H1 (cell line): ENCODE measurements at regions of chr3 and their contacts with region 1.

Region 1: DNA sequence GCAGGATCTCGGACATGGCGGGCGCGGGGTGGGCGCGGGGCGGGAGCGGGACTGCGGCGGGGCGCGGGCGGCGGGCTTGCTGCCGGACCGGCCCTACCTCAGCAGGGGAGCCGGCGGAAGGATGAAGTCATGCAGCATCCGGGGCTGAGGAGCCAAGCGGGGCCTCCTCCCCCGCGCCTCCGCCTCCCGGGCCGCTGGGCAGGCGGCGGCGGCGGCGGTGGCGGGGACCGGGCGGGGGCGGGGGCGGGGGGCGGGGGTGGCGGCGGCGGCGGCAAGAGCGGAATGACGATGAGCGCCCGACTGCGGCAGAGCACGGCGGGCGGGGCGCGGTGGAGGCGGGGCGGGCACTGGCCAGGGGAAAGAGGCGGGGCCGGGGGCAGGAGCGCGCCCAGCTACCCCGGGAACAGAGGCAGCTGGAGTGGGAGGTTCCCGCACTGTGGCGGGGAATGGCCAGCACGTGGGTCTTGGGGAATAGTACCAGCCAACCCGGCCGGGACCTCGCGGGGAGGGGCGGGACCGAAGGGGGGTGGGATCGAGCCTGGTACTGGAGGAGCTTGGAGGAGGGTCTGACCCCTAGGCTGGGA is at the start of gene CAMK2N2:
- DNase-seq: peak in 1 of 2 experiments; percentile 88
- H3K4me3 ChIP-seq: peak within 1 kb of the TSS; percentile 36 to 84 (median 74)
- H3K27ac ChIP-seq: no peak within 1 kb of the TSS
- H3K4me1 ChIP-seq: peaks cover 0 to 17% (median 8%) of the 10 kb centered on the region in 4 experiments; a peak in 4 of 7 replicates
- H3K27me3 ChIP-seq: peaks cover 7 to 50% (median 38%) of the 10 kb centered on the region in 4 experiments
- CTCF ChIP-seq: no peak
- EP300 ChIP-seq: no peak
- POLR2A ChIP-seq: no peak
- RAD21 ChIP-seq: no peak
- total RNA-seq, gene CAMK2N2: 16.9 and 17.7 TPM in 2 replicates

Region 2: GRCh38 chr3:184241447-184242296 is 19.7 kb before region 1 on chr3:
- CTCF ChIA-PET with region 1: interaction called, 17 read pairs
- POLR2A ChIA-PET with region 1: interaction called, 12 read pairs
- DNase-seq: peak in 1 of 2 experiments; percentile 57
- H3K4me3 ChIP-seq: peak overlapping the region in 3 of 4 experiments; percentile 26 to 54 (median 42); a peak in 6 of 8 replicates
- H3K27ac ChIP-seq: no peak overlapping the region
- H3K4me1 ChIP-seq: peaks cover 0 to 5% (median 1%) of the 10 kb centered on the region in 4 experiments; a peak in 3 of 7 replicates
- H3K27me3 ChIP-seq: no peaks in the 10 kb centered on the region; a peak in 2 of 7 replicates
- CTCF ChIP-seq: peak in 2 of 3 experiments; percentile 41 to 56; a peak in 3 of 4 replicates
- EP300 ChIP-seq: no peak
- POLR2A ChIP-seq: no peak
- RAD21 ChIP-seq: peak; percentile 45 to 65

Region 3: DNA sequence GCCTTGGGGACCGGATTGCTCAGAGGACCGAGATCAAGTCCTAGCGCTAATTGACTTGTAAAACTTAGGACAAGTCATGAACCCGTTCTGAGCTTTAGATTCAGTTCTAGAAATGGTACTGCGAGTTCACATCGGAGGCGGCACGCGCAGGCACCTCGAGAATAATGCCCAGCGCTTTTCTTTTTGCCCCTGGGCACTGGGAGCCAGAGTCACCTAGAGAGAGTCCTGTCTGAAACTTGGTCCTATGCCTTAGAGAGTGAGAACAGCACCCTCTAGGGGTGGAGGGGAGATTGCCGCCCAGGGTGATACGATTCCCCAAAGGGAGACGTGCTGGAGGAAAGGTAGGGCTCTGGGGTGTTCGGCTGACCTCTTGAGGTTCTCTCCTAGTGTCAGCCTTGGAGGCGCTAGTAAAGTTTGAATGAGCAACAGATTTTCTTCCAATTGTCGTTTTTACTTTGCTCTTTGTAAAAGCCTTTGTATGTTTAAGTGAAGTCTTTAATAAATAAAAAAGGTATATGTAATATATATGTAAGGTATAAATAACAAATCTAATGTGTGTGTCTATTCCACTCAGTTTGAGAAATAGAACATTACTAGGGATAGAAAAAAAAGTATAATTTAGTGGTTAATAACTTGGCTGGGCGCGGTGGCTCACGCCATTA is 11.1 kb before region 1 on chr3:
- CTCF ChIA-PET with region 1: interaction called, 31 read pairs
- POLR2A ChIA-PET with region 1: interaction called, 8 read pairs
- DNase-seq: peak; percentile 94 to 98
- H3K4me3 ChIP-seq: peak overlapping the region; percentile 71 to 89 (median 82)
- H3K27ac ChIP-seq: no peak overlapping the region
- H3K4me1 ChIP-seq: no peaks in the 10 kb centered on the region
- H3K27me3 ChIP-seq: no peaks in the 10 kb centered on the region; a peak in 1 of 7 replicates
- CTCF ChIP-seq: peak; percentile 90 to 97 (median 91)
- EP300 ChIP-seq: no peak
- POLR2A ChIP-seq: no peak
- RAD21 ChIP-seq: peak; percentile 53 to 72